A673 (cell line): ENCODE measurements at regions of chr3 and their contacts with region 1.

Region 1: GRCh38 chr3:196609343-196609775 is 30.1 kb upstream of the NRROS start:
- DNase-seq: peak; percentile 94
- H3K4me3 ChIP-seq: no peak overlapping the region
- H3K27ac ChIP-seq: no peak overlapping the region
- H3K4me1 ChIP-seq: peaks cover 4% of the 10 kb centered on the region
- H3K27me3 ChIP-seq: no peaks in the 10 kb centered on the region
- CTCF ChIP-seq: peak; percentile 96

Region 2: DNA sequence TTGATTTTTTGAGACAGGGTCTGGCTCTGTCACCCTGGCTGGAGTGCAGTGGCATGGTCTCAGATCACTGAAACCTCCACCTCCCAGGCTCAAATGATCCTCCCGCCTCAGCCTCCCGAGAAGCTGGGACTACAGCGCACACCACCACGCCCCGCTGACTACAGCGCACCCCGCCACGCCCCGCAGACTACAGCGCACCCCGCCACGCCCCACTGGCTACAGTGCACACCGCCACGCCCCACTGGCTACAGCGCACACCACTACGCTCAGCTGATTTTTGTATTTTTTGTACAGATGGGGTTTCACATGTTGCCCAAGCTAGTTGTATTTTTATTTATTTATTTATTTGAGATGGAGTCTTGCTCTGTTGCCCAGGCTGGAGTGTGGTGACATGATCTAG is 357.4 kb before region 1 on chr3:
- CTCF ChIA-PET with region 1: no interaction called
- POLR2A ChIA-PET with region 1: no interaction called
- intact Hi-C with region 1: loop called (anchors 10 kb)
- DNase-seq: no peak
- H3K4me3 ChIP-seq: no peak overlapping the region
- H3K27ac ChIP-seq: no peak overlapping the region
- H3K4me1 ChIP-seq: no peaks in the 10 kb centered on the region
- H3K27me3 ChIP-seq: no peaks in the 10 kb centered on the region
- CTCF ChIP-seq: no peak

Region 3: GRCh38 chr3:196486263-196486662 is 123.1 kb before region 1 on chr3:
- CTCF ChIA-PET with region 1: no interaction called
- POLR2A ChIA-PET with region 1: no interaction called
- intact Hi-C with region 1: no loop called
- DNase-seq: no peak
- H3K4me3 ChIP-seq: no peak overlapping the region
- H3K27ac ChIP-seq: no peak overlapping the region
- H3K4me1 ChIP-seq: no peaks in the 10 kb centered on the region
- H3K27me3 ChIP-seq: no peaks in the 10 kb centered on the region
- CTCF ChIP-seq: peak; percentile 43

Region 4: GRCh38 chr3:196684548-196685407 is 75.4 kb after region 1 on chr3:
- CTCF ChIA-PET with region 1: interaction called, 18 read pairs
- POLR2A ChIA-PET with region 1: no interaction called
- intact Hi-C with region 1: loop called (anchors 1 kb)
- DNase-seq: peak; percentile 83
- H3K4me3 ChIP-seq: no peak overlapping the region
- H3K27ac ChIP-seq: no peak overlapping the region
- H3K4me1 ChIP-seq: peaks cover 40% of the 10 kb centered on the region
- H3K27me3 ChIP-seq: no peaks in the 10 kb centered on the region
- CTCF ChIP-seq: peak; percentile 90

Region 5: DNA sequence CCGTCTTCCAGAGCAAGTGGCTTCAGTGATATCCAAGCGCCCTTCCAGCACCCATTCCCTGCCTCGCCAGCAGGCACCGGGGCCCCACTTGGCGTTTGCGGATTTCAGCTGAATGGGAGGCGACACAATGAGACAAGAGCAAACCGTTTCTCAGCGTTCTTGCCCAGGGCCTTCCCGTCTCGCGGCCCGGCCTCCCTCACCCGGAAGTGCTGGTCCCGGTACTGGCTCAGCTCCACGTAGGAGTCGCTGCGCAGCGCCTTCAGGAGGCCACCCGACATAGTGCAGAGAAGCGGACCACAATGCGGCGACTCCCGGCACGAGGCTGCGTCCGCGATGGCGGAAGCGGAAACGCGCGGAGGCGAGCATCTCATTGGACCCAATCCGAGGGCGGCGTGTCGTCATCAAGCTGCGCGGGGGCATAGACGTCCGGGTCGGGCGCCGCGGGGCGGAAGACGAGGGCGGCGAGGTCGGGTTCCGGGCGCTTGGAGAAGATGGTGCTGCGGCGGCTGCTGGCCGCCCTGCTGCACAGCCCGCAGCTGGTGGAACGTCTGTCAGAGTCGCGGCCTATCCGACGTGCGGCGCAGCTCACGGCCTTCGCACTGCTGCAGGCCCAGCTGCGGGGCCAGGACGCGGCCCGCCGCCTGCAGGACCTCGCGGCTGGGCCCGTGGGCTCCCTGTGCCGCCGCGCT is 333.0 kb after region 1 on chr3 and contains the start of gene NCBP2:
- CTCF ChIA-PET with region 1: no interaction called
- POLR2A ChIA-PET with region 1: no interaction called
- intact Hi-C with region 1: loop called (anchors 10 kb)
- DNase-seq: peak; percentile 99
- H3K4me3 ChIP-seq: peak within 1 kb of the TSS; percentile 95
- H3K27ac ChIP-seq: peak within 1 kb of the TSS; percentile 97
- H3K4me1 ChIP-seq: peaks cover 12% of the 10 kb centered on the region
- H3K27me3 ChIP-seq: no peaks in the 10 kb centered on the region
- CTCF ChIP-seq: peak; percentile 81
- total RNA-seq, gene NCBP2: 87.6 and 93.7 TPM in 2 replicates

Region 6: GRCh38 chr3:196969660-196970546 is 360.5 kb after region 1 on chr3:
- CTCF ChIA-PET with region 1: interaction called, 3 read pairs
- POLR2A ChIA-PET with region 1: no interaction called
- intact Hi-C with region 1: loop called (anchors 1 kb)
- DNase-seq: peak; percentile 76
- H3K4me3 ChIP-seq: peak overlapping the region; percentile 75
- H3K27ac ChIP-seq: peak overlapping the region; percentile 34
- H3K4me1 ChIP-seq: no peaks in the 10 kb centered on the region
- H3K27me3 ChIP-seq: no peaks in the 10 kb centered on the region
- CTCF ChIP-seq: peak; percentile 50; the same call in 1 of the 2 replicates

Region 7: GRCh38 chr3:197186887-197187588 is 577.7 kb after region 1 on chr3:
- CTCF ChIA-PET with region 1: no interaction called
- POLR2A ChIA-PET with region 1: no interaction called
- intact Hi-C with region 1: loop called (anchors 10 kb)
- DNase-seq: peak; percentile 81
- H3K4me3 ChIP-seq: no peak overlapping the region
- H3K27ac ChIP-seq: no peak overlapping the region
- H3K4me1 ChIP-seq: peaks cover 5% of the 10 kb centered on the region
- H3K27me3 ChIP-seq: no peaks in the 10 kb centered on the region
- CTCF ChIP-seq: peak; percentile 87